ENCODE measurements at regions of chr4 and their contacts with region 1.

Region 1: GRCh38 chr4:138576684-138577083 is 334.5 kb upstream of the SLC7A11 start:
- DNase-seq: peak; percentile 24
- H3K4me3 ChIP-seq: no peak overlapping the region
- H3K27ac ChIP-seq: no peak overlapping the region
- H3K4me1 ChIP-seq: no peaks in the 10 kb centered on the region
- CTCF ChIP-seq: peak; percentile 67

Region 2: DNA sequence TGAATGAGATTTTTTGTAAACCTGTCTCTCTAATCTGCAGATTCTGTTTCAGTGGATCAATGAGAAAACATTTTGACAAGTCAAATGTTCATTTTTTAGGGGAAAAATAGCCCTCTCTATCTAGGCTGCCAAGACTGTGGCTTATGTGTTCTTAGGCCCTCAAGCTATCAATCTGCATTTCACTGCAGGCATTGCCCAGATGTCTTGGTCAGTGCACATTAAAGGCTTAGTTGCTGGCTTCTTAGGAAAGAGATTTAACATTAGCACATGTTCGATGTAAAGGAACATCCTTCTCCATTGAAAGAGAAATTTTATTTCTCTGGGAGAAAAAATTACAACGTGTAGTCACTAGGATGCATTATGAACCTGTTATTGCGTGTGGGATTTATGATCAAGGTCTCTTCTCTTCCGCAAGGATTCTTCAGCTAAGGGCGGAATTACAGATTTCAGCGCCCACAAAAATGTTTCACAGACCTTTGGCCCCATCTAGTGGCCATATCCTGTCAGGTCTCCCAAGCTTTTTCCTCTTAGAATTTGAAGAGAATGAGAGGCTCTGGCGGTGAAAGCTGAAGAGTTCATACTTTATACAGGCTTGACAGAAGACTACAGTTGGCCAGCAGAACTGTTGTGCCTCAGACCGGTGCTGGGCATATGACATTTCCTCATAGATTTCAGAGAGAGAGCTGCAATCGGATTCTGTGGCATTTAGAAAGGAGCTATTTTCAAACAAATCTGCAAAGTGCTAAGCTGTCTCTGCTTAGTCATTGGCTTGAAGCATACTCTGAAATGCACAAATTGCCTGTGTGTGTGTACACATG is 294.3 kb after region 1 on chr4:
- CTCF ChIA-PET with region 1: no interaction called
- POLR2A ChIA-PET with region 1: interaction called, 3 read pairs
- intact Hi-C with region 1: loop called (anchors 5 kb)
- DNase-seq: peak; percentile 60
- H3K4me3 ChIP-seq: no peak overlapping the region
- H3K27ac ChIP-seq: no peak overlapping the region
- H3K4me1 ChIP-seq: no peaks in the 10 kb centered on the region
- CTCF ChIP-seq: peak; percentile 92

Measured in OCI-LY7 (cell line).